ENCODE measurements at regions of chr1 and their contacts with region 1.

Region 1: GRCh38 chr1:61043010-61043820 is 39.1 kb upstream of the NFIA start:
- DNase-seq: peak; percentile 89 to 95 (median 90)
- ATAC-seq: peak; percentile 87 to 97 (median 96)
- H3K4me3 ChIP-seq: peak overlapping the region; percentile 28 to 67 (median 59)
- H3K27ac ChIP-seq: peak overlapping the region in 10 of 12 donors; percentile 22 to 82 (median 72)
- H3K4me1 ChIP-seq: peaks cover 0 to 11% (median 4%) of the 10 kb centered on the region in 12 donors
- H3K27me3 ChIP-seq: no peaks in the 10 kb centered on the region
- CTCF ChIP-seq: peak; percentile 86 to 94 (median 92)
- POLR2A ChIP-seq: no peak

Region 2: DNA sequence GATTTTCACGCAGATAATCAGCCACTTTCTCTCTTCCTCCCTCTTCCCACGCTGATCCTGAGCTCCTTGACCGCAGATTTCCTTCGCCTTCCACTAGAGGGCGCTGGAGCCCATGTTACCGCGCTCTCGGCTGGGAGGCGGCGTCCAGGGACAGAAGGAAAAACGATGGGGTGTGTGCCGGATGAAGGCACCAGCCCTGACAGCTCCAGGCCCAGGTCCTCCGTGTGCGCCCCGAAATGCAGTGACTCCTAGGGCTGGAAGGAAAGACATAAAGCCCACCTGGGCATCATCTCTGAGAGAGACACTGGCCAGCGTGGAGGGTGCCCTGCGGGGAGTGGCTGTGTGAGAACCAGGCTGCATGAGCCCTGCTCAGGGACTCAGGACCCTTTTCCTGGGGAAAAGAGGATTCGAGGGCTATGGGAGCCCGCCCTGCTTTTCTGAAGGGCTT is 1071.7 kb before region 1 on chr1:
- intact Hi-C with region 1: loop called in 6 of 10 experiments (anchors 2 to 10 kb)
- DNase-seq: peak; percentile 55 to 84 (median 68)
- ATAC-seq: peak; percentile 45 to 92 (median 88)
- H3K4me3 ChIP-seq: no peak overlapping the region
- H3K27ac ChIP-seq: no peak overlapping the region
- H3K4me1 ChIP-seq: peaks cover 0 to 8% (median 3%) of the 10 kb centered on the region in 12 donors
- H3K27me3 ChIP-seq: peaks cover 0 to 9% (median 0%) of the 10 kb centered on the region in 9 donors
- CTCF ChIP-seq: peak; percentile 81 to 93 (median 88)
- POLR2A ChIP-seq: no peak

Region 3: GRCh38 chr1:60281360-60281932 is 761.8 kb before region 1 on chr1:
- intact Hi-C with region 1: loop called (anchors 2 to 10 kb)
- DNase-seq: peak in 4 of 5 donors; percentile 43 to 72 (median 54)
- ATAC-seq: peak; percentile 87 to 97 (median 92)
- H3K4me3 ChIP-seq: no peak overlapping the region
- H3K27ac ChIP-seq: no peak overlapping the region
- H3K4me1 ChIP-seq: peaks cover 0 to 18% (median 8%) of the 10 kb centered on the region in 12 donors
- H3K27me3 ChIP-seq: no peaks in the 10 kb centered on the region
- CTCF ChIP-seq: peak; percentile 80 to 94 (median 90)
- POLR2A ChIP-seq: no peak

Region 4: GRCh38 chr1:60857851-60858250 is 185.4 kb before region 1 on chr1:
- intact Hi-C with region 1: loop called in 2 of 10 experiments (anchors 5 kb)
- DNase-seq: no peak
- ATAC-seq: no peak
- H3K4me3 ChIP-seq: no peak overlapping the region
- H3K27ac ChIP-seq: no peak overlapping the region
- H3K4me1 ChIP-seq: peaks cover 0 to 11% (median 3%) of the 10 kb centered on the region in 12 donors
- H3K27me3 ChIP-seq: no peaks in the 10 kb centered on the region
- CTCF ChIP-seq: no peak
- POLR2A ChIP-seq: no peak

Region 5: DNA sequence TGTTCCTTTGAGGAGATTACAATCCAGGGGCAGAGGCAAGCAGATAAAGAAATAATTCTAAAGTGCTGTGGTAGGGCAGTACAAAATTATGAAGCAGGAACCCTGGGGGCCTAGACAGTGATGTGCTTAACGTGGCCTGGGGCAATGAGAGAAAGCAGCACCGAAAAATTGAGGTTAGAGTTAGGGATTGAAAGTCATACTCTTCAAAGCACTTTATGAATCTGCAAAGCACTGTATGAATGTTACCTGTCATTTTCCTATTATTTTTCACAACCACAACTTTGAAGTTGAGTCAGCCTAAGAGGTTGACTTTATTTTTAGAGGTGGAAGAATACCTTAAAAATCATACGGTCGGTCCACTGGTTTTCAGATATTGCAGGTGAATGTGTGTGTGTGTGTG is 144.2 kb before region 1 on chr1:
- intact Hi-C with region 1: no loop called
- DNase-seq: no peak
- ATAC-seq: no peak
- H3K4me3 ChIP-seq: no peak overlapping the region
- H3K27ac ChIP-seq: peak overlapping the region in 2 of 12 donors; percentile 13 to 25
- H3K4me1 ChIP-seq: peaks cover 3 to 59% (median 23%) of the 10 kb centered on the region in 12 donors
- H3K27me3 ChIP-seq: no peaks in the 10 kb centered on the region
- CTCF ChIP-seq: no peak
- POLR2A ChIP-seq: no peak

Region 6: GRCh38 chr1:60978421-60979357 is 64.5 kb before region 1 on chr1:
- intact Hi-C with region 1: loop called in 6 of 10 experiments (anchors 5 to 10 kb)
- DNase-seq: no peak
- ATAC-seq: peak in 3 of 4 donors; percentile 47 to 74 (median 54)
- H3K4me3 ChIP-seq: no peak overlapping the region
- H3K27ac ChIP-seq: no peak overlapping the region
- H3K4me1 ChIP-seq: peaks cover 0 to 12% (median 2%) of the 10 kb centered on the region in 12 donors
- H3K27me3 ChIP-seq: no peaks in the 10 kb centered on the region
- CTCF ChIP-seq: peak; percentile 36 to 64 (median 42)
- POLR2A ChIP-seq: no peak

Region 7: GRCh38 chr1:61436016-61436415 is 392.8 kb after region 1 on chr1:
- intact Hi-C with region 1: no loop called
- DNase-seq: no peak
- ATAC-seq: peak in 3 of 4 donors; percentile 10 to 55 (median 30)
- H3K4me3 ChIP-seq: no peak overlapping the region
- H3K27ac ChIP-seq: peak overlapping the region; percentile 32 to 84 (median 68)
- H3K4me1 ChIP-seq: peaks cover 7 to 64% (median 41%) of the 10 kb centered on the region in 12 donors
- H3K27me3 ChIP-seq: no peaks in the 10 kb centered on the region
- CTCF ChIP-seq: peak in 6 of 12 donors; percentile 7 to 38 (median 24)
- POLR2A ChIP-seq: no peak

Measured in heart left ventricle (tissue), 16 donors.